Posterior cingulate gyrus (tissue), 11 donors: ENCODE measurements at regions of chr1 and their contacts with region 1.

Region 1: GRCh38 chr1:181424786-181425403 is 58.4 kb upstream of the CACNA1E start:
- DNase-seq: peak; percentile 36 to 95 (median 80)

Region 2: DNA sequence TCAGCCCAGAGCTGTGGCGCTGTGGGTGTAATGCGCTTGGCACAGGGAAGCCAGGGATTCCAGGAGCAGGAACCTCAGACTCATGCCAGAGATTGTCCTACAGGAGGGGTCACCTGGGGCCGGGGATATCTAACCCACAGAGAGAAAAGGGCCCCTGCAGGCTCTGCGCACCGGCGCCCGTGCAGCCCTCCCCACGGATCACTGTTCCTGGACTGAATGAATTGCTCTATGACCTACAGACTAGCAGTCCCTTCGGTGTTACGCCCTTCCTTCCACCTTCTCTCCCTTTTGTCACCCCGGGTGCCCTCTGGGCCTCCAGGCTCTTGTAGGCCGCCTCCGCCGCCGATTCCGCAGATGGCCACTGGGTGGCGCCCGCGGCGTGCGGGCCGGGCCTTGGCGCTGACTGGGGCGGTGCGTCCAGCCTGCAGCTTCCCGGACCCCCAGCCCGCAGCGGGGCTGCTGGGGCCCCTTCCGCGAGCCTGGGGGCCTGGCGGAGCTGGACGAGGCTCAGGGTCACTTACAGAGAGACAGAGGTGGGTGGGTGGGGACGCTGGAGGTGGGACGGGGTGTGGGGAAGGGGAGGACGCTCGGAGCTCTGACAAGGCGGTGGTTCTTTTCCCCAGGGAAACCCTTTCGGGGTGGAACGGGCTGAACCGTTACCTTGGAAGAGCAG is 235.1 kb before region 1 on chr1:
- intact Hi-C with region 1: loop called (anchors 1 kb)
- DNase-seq: peak; percentile 56 to 97 (median 74)